ENCODE measurements at regions of chr18 and their contacts with region 1.

Region 1: DNA sequence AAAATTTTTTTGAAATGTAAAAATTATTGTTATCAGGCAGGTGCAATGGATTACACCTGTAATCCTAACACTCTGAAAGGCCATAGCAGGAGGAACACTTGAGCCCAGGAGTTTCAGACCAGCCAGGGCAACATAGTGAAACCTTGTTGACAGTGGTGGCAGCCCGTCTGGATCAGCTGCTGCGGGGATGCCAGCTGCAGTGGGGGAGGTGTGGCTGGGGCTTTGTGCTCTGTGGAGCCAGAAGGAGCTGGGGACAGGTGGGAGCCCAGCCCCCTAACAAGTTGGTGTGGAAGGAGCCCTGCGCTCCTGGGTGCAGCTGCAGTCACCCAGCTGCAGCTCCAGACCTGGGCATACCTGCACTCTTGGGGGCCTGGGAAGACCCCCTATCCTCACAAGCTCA is 182.4 kb upstream of the MC4R start:
- DNase-seq: no peak
- H3K4me3 ChIP-seq: no peak overlapping the region
- H3K27ac ChIP-seq: no peak overlapping the region
- H3K27me3 ChIP-seq: peaks cover 0 to 11% (median 0%) of the 10 kb centered on the region in 45 donors
- CTCF ChIP-seq: no peak

Region 2: DNA sequence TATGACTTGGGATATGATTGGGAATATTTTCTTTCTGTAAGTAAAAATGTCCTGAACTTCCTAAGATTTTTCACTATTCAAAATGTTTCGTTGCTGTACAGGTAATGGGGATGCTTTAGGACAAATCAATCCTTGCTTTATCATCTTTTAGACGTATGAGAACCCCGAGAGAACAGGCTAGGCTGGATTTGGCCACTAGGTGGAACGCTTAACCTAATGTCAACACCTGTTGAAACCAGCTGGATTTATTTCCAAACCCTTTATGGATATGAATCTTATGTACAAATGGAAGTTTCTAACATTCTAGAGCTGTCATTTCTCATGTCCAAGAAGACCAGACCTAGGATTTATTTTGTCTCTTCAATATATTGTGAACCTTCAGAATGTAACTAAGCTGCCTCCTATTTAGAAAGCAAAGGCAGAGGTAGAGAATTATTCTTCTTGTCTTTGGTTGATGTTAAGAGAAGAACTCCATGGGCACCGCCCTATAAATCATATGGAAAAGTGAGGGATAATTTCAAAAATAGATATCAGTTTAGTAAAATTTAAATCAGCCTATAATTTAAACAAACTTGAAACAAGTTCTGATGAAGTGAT is 558.5 kb before region 1 on chr18:
- intact Hi-C with region 1: loop called (anchors 5 kb)
- DNase-seq: peak in 2 of 10 donors; percentile 66 to 68
- H3K4me3 ChIP-seq: no peak overlapping the region
- H3K27ac ChIP-seq: no peak overlapping the region
- H3K27me3 ChIP-seq: peaks cover 0 to 3% (median 0%) of the 10 kb centered on the region in 45 donors
- CTCF ChIP-seq: peak; percentile 33 to 80 (median 60)

Region 3: DNA sequence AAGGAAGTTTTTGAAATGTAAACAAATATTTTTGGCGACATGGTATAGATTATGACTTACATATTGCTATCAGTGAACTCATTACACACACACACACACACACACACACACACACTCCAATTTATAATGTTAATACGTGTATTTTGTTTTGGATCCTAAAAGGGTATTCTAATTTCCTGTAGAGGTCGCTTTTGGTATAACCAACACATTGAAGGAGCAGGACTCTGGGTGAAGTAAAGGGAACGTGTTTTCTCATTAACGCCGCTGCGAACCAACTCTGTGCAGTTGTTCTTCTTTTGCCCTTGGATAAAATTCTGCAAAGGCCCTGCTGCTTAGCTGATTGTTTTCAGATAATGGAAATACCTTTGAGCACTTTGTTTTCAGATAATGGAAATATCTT is 464.8 kb before region 1 on chr18:
- intact Hi-C with region 1: loop called in 1 of 2 experiments (anchors 10 kb)
- DNase-seq: no peak
- H3K4me3 ChIP-seq: no peak overlapping the region
- H3K27ac ChIP-seq: no peak overlapping the region
- H3K27me3 ChIP-seq: no peaks in the 10 kb centered on the region
- CTCF ChIP-seq: peak in 44 of 56 donors; percentile 1 to 68 (median 34)

Region 4: GRCh38 chr18:60189856-60190255 is 365.1 kb before region 1 on chr18:
- intact Hi-C with region 1: no loop called
- DNase-seq: no peak
- H3K4me3 ChIP-seq: no peak overlapping the region
- H3K27ac ChIP-seq: no peak overlapping the region
- H3K27me3 ChIP-seq: no peaks in the 10 kb centered on the region
- CTCF ChIP-seq: no peak

Measured in dorsolateral prefrontal cortex (tissue), 120 donors.